BJ (cell line): ENCODE measurements at regions of chr11 and their contacts with region 1.

Region 1: DNA sequence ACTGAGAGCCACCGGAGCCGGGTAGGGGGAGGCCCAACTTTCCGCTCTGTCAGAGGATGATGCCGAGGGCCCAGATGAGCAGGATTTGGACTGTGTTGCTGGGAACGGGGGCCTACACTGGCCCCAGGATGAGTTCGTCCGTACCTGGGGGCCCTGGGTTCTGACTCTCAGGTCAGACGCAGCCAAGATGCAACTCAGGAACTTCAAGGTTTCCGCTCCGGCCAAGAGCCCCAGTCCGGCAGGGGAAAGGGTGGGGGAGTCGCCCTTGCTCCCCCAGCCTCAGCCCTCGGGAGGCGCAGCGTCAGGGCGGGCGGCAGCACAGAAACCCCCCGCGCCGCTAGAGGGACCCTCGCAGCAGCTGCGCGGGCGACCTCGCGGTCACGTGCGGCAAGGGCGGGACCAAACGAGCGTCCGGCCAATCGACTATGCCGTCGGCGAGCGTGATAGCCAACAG is 241 bp upstream of the ARL2 start:
- DNase-seq: no peak
- H3K4me3 ChIP-seq: peak overlapping the region; percentile 93
- H3K27me3 ChIP-seq: no peaks in the 10 kb centered on the region
- CTCF ChIP-seq: peak; percentile 40; the same call in 1 of the 2 replicates

Region 2: GRCh38 chr11:64703048-64703447 is 310.7 kb before region 1 on chr11:
- CTCF ChIA-PET with region 1: no interaction called
- POLR2A ChIA-PET with region 1: no interaction called
- DNase-seq: no peak
- H3K4me3 ChIP-seq: no peak overlapping the region
- H3K27me3 ChIP-seq: peaks cover 17% of the 10 kb centered on the region
- CTCF ChIP-seq: no peak

Region 3: DNA sequence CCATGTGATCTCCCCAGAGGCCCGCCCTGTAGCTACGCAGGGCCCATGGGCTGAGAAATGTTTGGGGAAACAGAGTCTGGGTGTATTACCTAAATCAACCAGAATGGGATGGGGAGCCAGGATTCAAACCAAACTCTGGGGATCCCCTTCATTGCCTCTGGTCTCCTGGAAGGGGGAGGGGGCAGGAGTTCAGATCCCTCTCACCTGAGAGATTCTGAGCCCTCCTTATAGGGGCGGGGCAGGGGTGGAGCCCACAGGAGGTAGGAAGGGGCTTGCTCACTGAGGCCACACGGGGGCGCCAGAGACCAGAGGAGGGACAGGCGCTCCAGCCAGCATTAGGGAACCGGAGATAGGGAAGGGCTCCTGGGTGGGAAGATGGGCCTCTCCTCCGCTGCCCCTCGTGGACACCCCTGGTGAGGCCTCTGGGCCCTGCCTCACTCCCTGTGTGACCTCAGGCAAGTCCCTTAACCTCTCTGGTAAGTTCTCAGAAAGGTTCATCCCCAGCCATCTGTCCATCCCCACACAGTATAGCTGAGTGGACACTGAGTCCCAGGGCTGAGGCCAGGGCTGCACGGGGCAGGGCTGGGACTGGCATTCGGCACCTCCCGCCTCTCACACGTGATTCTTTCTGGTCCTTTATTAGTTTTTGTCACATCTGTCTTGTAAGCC is 166.6 kb before region 1 on chr11:
- CTCF ChIA-PET with region 1: interaction called, 35 read pairs
- POLR2A ChIA-PET with region 1: no interaction called
- DNase-seq: no peak
- H3K4me3 ChIP-seq: no peak overlapping the region
- H3K27me3 ChIP-seq: no peaks in the 10 kb centered on the region
- CTCF ChIP-seq: peak; percentile 96

Region 4: GRCh38 chr11:64996710-64997380 is 16.9 kb before region 1 on chr11 and contains the start of gene BATF2:
- CTCF ChIA-PET with region 1: interaction called, 13 read pairs
- POLR2A ChIA-PET with region 1: no interaction called
- DNase-seq: no peak
- H3K4me3 ChIP-seq: peak within 1 kb of the TSS; percentile 35
- H3K27me3 ChIP-seq: no peaks in the 10 kb centered on the region; the same call in 1 of the 2 replicates
- CTCF ChIP-seq: peak; percentile 74
- polyA plus RNA-seq, gene BATF2: 1.1 and 1.5 TPM in 2 replicates

Region 5: DNA sequence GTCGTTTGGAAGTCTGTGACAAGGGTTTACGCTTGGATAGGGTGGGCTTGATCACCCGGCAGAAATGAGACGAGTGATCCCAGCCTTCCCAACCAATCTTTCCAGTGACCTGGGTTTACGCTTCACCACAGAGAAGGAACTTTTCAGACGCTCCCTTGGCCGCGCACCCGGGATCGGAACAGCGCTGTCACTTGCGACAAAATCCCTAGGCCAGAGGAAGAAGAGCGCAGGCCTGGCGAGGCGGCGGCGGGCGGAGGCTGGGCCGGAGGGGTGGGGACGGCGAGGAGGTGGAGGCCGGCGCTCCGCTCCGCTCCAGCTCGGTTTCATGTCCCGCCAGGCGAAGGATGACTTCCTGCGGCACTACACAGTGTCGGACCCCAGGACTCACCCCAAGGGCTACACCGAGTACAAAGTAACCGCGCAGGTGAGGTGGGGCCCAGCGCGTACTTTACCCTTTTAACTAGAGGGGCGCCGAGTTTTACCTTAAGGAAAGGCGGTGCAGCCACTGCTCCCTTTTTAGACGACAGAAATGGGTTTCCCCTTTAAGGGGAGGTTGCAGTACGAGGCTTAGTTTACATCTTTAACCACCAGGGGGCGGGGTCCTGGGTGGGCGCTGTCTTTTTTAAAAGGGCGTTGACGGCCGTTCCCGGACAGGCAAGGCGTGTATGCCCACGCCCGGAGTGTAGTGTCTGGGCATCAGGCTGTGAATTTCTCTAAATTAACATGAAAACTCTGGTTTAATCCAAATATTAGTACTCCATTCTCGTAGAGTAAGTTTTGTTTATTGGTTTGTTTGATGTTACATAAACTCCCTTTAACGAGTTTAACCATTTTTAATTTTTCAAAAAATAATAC is 13.7 kb after region 1 on chr11 and contains the start of gene SNX15:
- CTCF ChIA-PET with region 1: interaction called, 56 read pairs
- POLR2A ChIA-PET with region 1: no interaction called
- DNase-seq: peak; percentile 75
- H3K4me3 ChIP-seq: peak within 1 kb of the TSS; percentile 61
- H3K27me3 ChIP-seq: no peaks in the 10 kb centered on the region
- CTCF ChIP-seq: peak; percentile 81
- polyA plus RNA-seq, gene SNX15: 8.3 and 15.3 TPM in 2 replicates

Region 6: DNA sequence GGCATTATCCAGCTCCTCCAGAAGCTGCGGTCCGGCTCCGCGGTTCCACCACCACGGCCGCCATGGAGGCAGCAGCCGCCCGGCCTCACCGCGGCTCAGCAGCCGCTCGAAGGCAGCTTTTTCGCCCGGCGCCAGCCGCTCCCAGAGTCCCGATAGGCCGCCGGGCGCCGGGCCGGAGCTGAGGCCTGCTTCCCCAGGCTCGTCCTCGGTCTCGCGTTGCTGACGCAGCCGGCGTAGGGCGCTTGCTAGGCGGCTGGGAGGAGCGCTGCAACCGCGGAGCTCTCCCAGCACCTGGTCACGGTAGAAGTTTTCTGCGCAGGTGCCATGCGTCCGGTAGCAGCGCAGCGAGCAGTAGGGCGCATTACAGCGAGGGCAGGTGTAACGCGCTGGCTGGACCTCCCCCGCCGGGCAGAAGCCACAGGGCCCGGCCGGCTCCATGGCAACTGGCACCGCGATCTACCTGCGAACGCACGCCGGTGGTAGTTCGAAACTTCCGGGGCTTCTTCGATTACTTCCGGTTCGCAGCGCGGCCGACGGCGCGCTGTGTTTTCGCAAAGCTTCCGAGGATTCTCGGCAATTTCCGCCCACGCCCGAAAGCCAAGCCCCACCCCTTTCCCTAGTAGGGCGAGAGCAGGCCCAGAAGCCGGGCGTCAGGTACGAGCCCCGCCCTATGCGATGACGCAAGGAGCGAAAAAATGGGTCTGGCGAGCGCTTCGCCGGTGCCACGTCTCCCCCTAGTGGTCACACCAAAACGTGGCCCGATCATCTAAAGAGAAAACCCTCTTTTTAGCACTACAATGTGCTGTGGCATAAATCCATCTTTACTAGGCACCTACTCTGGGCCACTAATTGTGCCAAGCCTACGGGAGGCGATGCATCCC is 103.7 kb after region 1 on chr11 and contains the start of gene ZNHIT2:
- CTCF ChIA-PET with region 1: interaction called, 31 read pairs
- POLR2A ChIA-PET with region 1: no interaction called
- DNase-seq: peak; percentile 94
- H3K4me3 ChIP-seq: peak within 1 kb of the TSS; percentile 79
- H3K27me3 ChIP-seq: no peaks in the 10 kb centered on the region
- CTCF ChIP-seq: peak; percentile 90
- polyA plus RNA-seq, gene ZNHIT2: 3.6 and 4.6 TPM in 2 replicates